Dorsolateral prefrontal cortex (tissue), 120 donors: ENCODE measurements at regions of chr6 and their contacts with region 1.

Region 1: DNA sequence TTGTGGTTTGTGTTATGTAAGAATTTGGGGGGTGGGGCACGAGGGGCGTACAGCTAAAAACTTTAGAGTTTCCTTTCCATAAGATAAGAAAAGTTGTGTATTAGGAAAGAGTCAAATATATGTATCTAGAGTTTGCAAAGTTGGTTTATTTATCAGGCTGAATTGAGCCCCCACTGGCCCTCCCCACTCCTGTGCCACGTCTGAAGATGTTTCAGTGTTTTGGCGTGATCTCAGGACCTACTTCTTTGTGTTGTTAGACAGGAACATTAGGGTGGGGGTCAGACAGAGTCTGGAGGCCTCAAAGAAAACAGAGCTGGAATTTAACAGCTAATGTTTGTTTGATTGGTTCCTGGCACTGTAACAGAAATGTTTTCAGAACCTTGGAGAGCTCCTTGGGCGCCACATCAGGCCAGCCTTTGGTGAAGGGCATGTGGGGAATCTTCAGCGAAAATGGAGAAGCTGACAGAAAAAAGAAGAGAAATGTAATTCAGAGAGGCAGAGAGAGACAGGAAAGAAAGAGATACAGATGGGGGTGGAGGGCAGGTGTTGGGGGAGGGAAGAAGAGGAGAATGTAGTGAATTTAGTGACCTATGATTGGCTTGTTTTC is 674 bp downstream of the NRSN1 start:
- DNase-seq: peak in 3 of 10 donors; percentile 31 to 40 (median 31)
- H3K4me3 ChIP-seq: peak overlapping the region; percentile 25 to 73 (median 56)
- H3K27ac ChIP-seq: peak overlapping the region in 38 of 59 donors; percentile 15 to 87 (median 60)
- H3K27me3 ChIP-seq: peaks cover 0 to 7% (median 0%) of the 10 kb centered on the region in 45 donors
- CTCF ChIP-seq: no peak

Region 2: GRCh38 chr6:24089736-24090135 is 37.0 kb before region 1 on chr6:
- intact Hi-C with region 1: no loop called
- DNase-seq: no peak
- H3K4me3 ChIP-seq: no peak overlapping the region
- H3K27ac ChIP-seq: no peak overlapping the region
- H3K27me3 ChIP-seq: no peaks in the 10 kb centered on the region
- CTCF ChIP-seq: no peak

Region 3: DNA sequence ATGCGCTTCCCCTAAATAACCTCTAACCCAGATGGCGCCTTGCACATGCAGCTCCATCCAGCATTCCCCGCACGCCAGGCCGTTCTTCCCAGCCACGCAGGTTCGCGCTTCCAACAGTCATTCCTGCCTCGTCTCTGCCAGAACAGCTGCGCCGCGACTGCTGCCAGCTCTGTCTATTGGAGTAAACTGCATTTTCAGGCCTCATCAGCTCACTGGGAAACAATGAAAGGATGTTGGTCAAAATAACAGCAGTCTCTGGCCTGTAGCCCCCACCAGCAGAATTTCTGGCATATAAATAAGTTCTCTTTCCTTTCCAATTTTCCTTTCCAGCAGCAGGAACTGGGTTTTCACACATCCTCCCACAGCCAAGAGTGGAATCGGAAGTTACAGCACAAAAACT is 13.9 kb after region 1 on chr6:
- intact Hi-C with region 1: loop called in 1 of 2 experiments (anchors 2 kb)
- DNase-seq: peak in 9 of 10 donors; percentile 45 to 84 (median 71)
- H3K4me3 ChIP-seq: peak overlapping the region in 26 of 59 donors; percentile 1 to 50 (median 16)
- H3K27ac ChIP-seq: peak overlapping the region in 19 of 59 donors; percentile 3 to 58 (median 32)
- H3K27me3 ChIP-seq: no peaks in the 10 kb centered on the region
- CTCF ChIP-seq: no peak